A673 (cell line): ENCODE measurements at regions of chr22 and their contacts with region 1.

Region 1: GRCh38 chr22:44735540-44736488 is 16.6 kb upstream of the ARHGAP8 start:
- DNase-seq: peak; percentile 61
- H3K4me3 ChIP-seq: no peak overlapping the region
- H3K27ac ChIP-seq: no peak overlapping the region
- H3K4me1 ChIP-seq: no peaks in the 10 kb centered on the region
- H3K27me3 ChIP-seq: peaks cover 35% of the 10 kb centered on the region
- CTCF ChIP-seq: peak; percentile 93

Region 2: DNA sequence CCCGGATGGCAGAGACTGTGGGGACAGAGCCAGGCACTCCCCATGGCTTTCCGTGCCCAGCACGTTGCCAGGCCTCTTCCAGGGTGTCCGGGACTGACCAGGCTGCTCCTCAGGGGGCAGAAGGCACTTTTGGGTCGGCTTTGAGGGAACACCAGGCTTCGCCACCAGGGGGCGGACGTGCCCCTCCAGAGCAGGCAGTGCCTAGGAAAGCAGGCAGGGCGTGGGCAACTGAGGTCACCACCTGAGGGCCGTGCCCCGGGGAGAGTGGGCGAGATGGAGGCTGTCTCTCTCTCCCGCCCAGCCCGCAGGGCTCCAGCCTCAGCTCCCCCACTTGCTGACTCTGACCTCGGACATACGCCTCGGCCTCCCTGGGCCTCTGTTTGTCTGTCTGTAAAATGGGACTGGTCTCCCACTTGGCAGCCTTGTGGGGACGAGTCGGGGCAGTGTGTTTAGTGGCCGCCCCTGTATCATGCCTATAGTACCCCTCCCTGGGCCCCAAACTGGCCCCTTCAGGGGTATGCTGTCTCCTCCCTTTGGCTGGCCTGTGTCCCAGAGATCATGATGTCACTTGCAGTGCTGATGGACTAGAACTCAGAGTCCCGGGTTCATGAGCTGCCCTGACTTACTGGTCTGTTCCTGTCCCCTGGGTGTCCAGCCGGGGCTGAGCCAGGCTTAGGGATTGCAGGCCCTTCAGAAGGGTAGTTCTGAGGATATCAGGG is 38.2 kb before region 1 on chr22:
- CTCF ChIA-PET with region 1: no interaction called
- POLR2A ChIA-PET with region 1: no interaction called
- intact Hi-C with region 1: loop called (anchors 1 kb)
- DNase-seq: peak; percentile 72
- H3K4me3 ChIP-seq: no peak overlapping the region
- H3K27ac ChIP-seq: no peak overlapping the region
- H3K4me1 ChIP-seq: peaks cover 4% of the 10 kb centered on the region
- H3K27me3 ChIP-seq: no peaks in the 10 kb centered on the region
- CTCF ChIP-seq: peak; percentile 94

Region 3: DNA sequence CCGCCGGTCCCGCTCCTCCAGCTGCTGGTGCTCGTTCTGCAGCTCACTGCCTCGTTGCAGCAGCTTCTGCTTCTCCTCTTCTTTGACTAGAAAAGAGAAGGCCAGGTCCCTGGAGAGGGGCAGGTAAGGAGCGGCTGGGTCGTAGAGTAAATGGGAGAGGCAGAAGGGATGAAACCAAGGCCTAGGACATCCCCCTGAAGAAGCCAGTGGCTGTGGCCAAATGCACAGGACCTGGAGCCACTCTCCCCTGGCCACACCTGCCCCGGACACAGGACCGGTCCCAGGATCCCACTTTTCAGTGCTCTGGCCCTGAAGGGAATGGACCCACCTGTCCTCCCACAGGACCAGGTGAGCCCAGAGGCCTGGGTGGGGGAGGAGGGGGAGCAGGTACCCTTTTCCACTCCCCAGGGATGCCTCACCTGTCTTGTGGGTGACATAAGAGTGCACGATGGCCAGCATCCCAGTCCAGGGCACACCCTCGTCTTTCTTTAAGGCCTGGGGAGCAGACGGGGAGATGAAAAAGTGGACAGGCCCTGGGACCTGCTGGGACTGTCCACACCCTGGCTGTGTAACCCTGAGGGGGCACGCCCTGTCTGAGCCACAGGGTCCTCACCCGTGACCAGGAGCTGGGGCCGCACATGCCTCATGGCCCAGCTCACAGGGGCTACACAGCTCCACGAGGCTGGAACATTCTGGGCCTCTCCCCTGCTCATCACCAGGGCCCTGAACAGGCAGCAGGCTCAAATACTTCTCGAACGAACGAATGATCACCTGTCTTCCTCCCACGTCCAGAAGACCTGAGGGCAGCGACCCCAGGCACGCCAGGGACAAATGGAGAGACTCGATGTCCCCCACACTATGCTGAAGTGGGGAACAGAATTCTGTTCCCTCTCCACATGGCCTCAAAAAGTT is 149.9 kb after region 1 on chr22:
- CTCF ChIA-PET with region 1: interaction called, 11 read pairs
- POLR2A ChIA-PET with region 1: no interaction called
- intact Hi-C with region 1: no loop called
- DNase-seq: no peak
- H3K4me3 ChIP-seq: no peak overlapping the region
- H3K27ac ChIP-seq: no peak overlapping the region
- H3K4me1 ChIP-seq: no peaks in the 10 kb centered on the region
- H3K27me3 ChIP-seq: no peaks in the 10 kb centered on the region
- CTCF ChIP-seq: no peak